A549 (cell line): ENCODE measurements at regions of chr9 and their contacts with region 1.

Region 1: GRCh38 chr9:137240861-137241489 is at the start of gene TUBB4B:
- DNase-seq: peak; percentile 99 to 100
- ATAC-seq: peak; percentile 61 to 78
- H3K4me3 ChIP-seq: peak within 1 kb of the TSS; percentile 91
- H3K27ac ChIP-seq: peak within 1 kb of the TSS; percentile 98 to 99
- H3K4me1 ChIP-seq: peaks cover 54% of the 10 kb centered on the region
- CTCF ChIP-seq: no peak
- EP300 ChIP-seq: no peak
- POLR2A ChIP-seq: peak; percentile 100
- RAD21 ChIP-seq: no peak
- polyA plus RNA-seq, gene TUBB4B: 256 and 268 TPM in 2 replicates

Region 2: DNA sequence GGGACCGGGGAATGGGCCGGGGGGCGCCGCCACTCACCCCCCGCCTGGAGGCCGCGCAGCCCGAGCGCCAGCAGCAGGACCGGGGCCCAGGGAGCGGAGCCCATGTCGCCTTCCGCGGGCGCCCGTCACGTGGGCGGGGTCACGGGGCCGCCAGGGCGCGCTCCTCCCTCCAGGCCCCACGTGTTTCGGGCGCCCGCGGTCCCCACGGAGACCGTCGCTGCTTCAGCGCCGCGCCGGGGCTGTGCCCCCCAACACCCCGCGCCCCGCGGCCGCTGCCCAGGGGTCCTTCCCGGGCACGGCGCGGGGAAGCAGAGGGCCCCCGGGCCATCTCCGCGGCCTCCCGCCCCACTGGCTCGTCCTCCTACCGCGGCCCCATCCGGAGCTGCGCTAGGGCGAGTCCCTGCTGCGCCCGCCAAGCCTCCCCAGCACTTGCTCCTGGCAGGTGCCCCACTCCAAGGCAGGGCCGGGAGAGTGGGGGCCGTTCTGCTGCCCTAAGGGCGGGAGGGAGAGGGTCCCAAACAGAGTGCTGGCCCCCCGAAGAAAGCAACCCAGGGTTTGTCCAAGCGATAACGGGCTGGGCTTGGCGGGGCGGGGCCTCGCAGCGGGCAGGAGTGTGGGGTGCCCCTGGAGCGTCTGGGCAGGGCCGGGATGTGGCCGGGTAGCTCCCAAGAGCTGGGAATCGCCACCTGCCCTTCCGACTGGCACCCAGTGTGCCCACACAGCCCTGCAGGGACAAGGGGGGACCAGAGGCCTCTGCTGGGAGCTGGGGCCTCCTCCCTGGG is 126.2 kb before region 1 on chr9 and contains the start of gene DPP7:
- CTCF ChIA-PET with region 1: interaction called, 19 read pairs
- POLR2A ChIA-PET with region 1: interaction called, 7 read pairs
- DNase-seq: peak; percentile 59 to 76
- ATAC-seq: peak; percentile 78 to 79
- H3K4me3 ChIP-seq: peak within 1 kb of the TSS; percentile 69
- H3K27ac ChIP-seq: peak within 1 kb of the TSS; percentile 96 to 97
- H3K4me1 ChIP-seq: peaks cover 6% of the 10 kb centered on the region; the same call in 2 of the 3 replicates
- CTCF ChIP-seq: no peak
- EP300 ChIP-seq: no peak
- POLR2A ChIP-seq: peak; percentile 65
- RAD21 ChIP-seq: no peak
- polyA plus RNA-seq, gene DPP7: 27.6 and 36.0 TPM in 2 replicates

Region 3: GRCh38 chr9:137150617-137151457 is 90.1 kb before region 1 on chr9:
- CTCF ChIA-PET with region 1: interaction called, 3 read pairs
- POLR2A ChIA-PET with region 1: interaction called, 25 read pairs
- DNase-seq: peak; percentile 74 to 87
- ATAC-seq: peak in 1 of 2 experiments; percentile 47; a peak in 3 of 6 replicates
- H3K4me3 ChIP-seq: no peak overlapping the region
- H3K27ac ChIP-seq: peak overlapping the region in 1 of 2 experiments; percentile 55; a peak in 3 of 6 replicates
- H3K4me1 ChIP-seq: peaks cover 21% of the 10 kb centered on the region; the same call in 1 of the 3 replicates
- CTCF ChIP-seq: no peak
- EP300 ChIP-seq: no peak
- POLR2A ChIP-seq: no peak
- RAD21 ChIP-seq: no peak

Region 4: GRCh38 chr9:137188490-137189296 is 52.3 kb before region 1 on chr9 and contains the starts of genes ANAPC2 and SSNA1:
- CTCF ChIA-PET with region 1: interaction called, 24 read pairs
- POLR2A ChIA-PET with region 1: interaction called, 11 read pairs
- DNase-seq: peak; percentile 69 to 96
- ATAC-seq: peak; percentile 66 to 82
- H3K4me3 ChIP-seq: peak within 1 kb of the TSS; percentile 92
- H3K27ac ChIP-seq: peak within 1 kb of the TSS; percentile 97
- H3K4me1 ChIP-seq: peaks cover 23% of the 10 kb centered on the region
- CTCF ChIP-seq: peak; percentile 39
- EP300 ChIP-seq: no peak
- POLR2A ChIP-seq: peak; percentile 65
- RAD21 ChIP-seq: peak; percentile 31 to 49; a peak in 3 of 5 replicates
- polyA plus RNA-seq, gene ANAPC2: 17.5 and 22.3 TPM in 2 replicates
- polyA plus RNA-seq, gene SSNA1: 52.6 and 54.1 TPM in 2 replicates

Region 5: DNA sequence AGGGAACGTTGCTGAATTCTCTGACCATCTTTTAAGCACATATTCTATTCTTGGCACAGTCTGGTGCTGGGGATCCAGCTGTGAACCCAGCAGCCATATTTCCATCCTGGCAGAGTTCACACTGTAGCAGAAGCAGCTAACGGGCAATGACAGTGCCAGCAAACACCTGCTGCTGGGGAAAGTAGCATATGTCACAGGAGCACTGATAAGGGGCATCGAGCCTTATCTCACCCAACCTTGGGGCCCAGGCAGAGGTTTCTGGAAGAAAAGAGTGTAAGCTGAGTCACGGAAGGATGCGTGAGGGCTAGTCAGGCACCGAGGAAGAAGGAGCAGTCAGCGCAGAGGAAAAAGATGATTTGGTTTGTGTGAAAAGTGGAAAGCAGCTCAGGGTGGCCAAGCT is 34.4 kb before region 1 on chr9:
- CTCF ChIA-PET with region 1: interaction called, 71 read pairs
- POLR2A ChIA-PET with region 1: interaction called, 5 read pairs
- DNase-seq: no peak
- ATAC-seq: no peak
- H3K4me3 ChIP-seq: peak overlapping the region; percentile 93
- H3K27ac ChIP-seq: peak overlapping the region in 1 of 2 experiments; percentile 97; a peak in 3 of 6 replicates
- H3K4me1 ChIP-seq: peaks cover 24% of the 10 kb centered on the region
- CTCF ChIP-seq: no peak
- EP300 ChIP-seq: no peak
- POLR2A ChIP-seq: no peak
- RAD21 ChIP-seq: no peak

Region 6: DNA sequence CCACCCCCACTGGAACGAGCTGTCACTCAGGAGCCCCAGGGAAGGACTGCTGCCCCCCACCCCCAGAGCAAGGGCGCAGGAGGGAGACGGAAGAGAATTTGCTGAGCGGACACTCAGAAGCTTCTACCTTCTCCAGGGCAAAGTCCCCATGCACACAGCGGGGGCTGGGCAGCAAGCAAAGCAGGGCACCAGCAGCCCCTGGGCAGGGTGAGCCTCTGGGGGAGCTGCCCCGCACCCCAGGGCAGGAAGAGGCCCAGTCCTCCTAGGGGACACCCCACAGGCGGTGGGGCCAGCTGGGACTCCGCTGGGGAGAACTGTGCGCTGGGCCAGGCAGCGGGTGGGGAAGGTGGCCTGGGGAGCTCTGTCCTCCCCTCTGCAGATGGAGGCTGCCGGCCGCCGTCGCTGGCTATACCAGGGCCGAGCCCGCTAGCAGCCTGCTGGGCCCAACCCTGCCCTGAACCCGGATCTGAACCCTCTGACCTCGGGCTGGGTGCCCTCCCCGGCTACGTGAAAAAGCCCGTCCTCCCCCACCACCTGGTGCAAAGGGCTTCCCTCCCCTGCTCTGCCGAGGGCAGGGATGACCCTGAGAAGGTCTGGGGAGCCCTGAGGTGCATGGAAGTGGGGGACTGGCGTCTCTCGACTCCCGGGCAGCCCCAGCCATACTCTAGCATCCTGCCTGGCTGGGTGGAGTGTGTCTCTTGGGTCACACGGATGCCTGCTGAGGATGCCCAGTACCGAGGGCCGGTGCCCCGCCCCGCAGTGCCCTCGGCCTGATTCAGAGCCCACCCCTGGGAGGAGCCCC is 10.9 kb before region 1 on chr9:
- CTCF ChIA-PET with region 1: interaction called, 102 read pairs
- POLR2A ChIA-PET with region 1: interaction called, 27 read pairs
- DNase-seq: no peak
- ATAC-seq: peak in 1 of 2 experiments; percentile 23; a peak in 3 of 6 replicates
- H3K4me3 ChIP-seq: no peak overlapping the region
- H3K27ac ChIP-seq: peak overlapping the region in 1 of 2 experiments; percentile 49; a peak in 2 of 6 replicates
- H3K4me1 ChIP-seq: peaks cover 48% of the 10 kb centered on the region
- CTCF ChIP-seq: no peak
- EP300 ChIP-seq: no peak
- POLR2A ChIP-seq: no peak
- RAD21 ChIP-seq: no peak

Region 7: DNA sequence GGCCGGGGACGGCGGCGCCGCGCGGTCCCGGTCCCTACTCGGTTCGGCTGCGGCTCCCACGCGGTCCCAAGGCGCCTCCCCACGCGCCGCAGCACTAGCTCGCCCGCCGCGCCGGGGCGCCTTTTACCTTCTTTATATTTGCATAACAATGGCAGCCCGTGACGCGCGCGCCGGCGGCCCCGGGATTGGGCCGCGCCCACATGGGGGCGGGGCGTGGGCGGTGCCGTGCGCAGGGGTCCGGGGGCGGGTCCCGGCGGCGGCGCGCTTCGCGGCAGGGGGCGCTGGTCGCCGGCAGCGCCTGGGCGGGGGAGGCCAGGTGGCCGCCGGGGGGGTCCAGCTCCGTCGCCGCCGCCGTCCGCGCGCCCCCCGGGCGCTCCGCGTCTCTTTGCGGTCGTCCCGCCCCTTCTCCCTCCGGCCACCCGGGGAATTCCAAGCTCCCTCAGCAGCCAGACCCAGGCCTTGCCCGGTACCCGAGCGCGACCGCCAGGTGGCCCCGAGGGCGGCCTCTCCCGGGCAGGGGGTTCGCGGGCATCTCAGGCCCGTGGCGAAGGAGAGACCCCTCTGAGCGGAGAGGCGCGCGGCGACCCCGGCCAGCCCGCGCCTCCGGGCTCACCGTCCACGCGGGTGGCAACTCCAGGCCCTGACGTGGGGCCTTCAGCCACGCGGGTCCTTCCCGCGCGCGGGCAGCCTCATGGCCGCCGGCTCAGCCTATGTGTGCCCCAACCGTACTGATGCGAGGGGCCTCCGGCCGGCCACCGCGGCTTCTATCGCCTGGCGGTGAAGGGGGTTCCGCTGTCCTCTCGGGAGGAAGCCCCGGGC is 61.4 kb after region 1 on chr9 and contains the start of gene NRARP:
- CTCF ChIA-PET with region 1: interaction called, 4 read pairs
- POLR2A ChIA-PET with region 1: interaction called, 19 read pairs
- DNase-seq: peak; percentile 77 to 89
- ATAC-seq: peak; percentile 54 to 61
- H3K4me3 ChIP-seq: peak within 1 kb of the TSS; percentile 49
- H3K27ac ChIP-seq: peak within 1 kb of the TSS; percentile 58 to 90
- H3K4me1 ChIP-seq: peaks cover 19% of the 10 kb centered on the region
- CTCF ChIP-seq: peak; percentile 90
- EP300 ChIP-seq: no peak
- POLR2A ChIP-seq: peak; percentile 97
- RAD21 ChIP-seq: peak; percentile 16 to 40; a peak in 3 of 5 replicates
- polyA plus RNA-seq, gene NRARP: 3.2 and 5.1 TPM in 2 replicates

Region 8: DNA sequence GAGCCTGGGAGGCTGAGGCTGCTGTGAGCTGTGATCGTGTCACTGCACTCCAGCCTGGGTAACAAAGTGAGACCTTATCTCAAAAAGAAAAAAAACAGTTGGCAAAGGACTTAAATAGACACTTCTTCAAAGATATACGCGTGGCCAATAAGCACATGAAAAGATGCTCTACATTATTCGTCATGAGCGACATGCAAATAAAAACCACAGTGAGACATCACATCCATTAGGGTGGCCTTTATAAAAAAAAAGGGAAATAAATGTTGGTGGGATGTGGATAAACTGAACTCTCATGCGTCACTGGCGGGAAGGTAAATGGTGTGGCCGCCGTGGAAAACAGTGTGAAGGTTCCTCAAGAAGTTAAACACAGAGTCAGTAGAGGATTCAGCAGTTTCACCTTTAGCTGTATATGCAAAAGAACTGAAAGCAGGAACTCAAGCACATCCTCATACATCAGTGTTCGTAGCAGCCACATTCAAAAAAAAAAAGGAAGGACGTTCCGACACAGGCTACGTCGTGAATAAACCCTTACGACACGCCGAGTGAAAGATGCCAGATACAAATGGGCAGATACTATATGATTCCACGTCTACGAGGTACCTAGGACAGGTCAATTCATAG is 85.6 kb after region 1 on chr9:
- CTCF ChIA-PET with region 1: no interaction called
- POLR2A ChIA-PET with region 1: no interaction called
- DNase-seq: no peak
- ATAC-seq: no peak; a peak in 2 of 6 replicates
- H3K4me3 ChIP-seq: no peak overlapping the region
- H3K27ac ChIP-seq: no peak overlapping the region
- H3K4me1 ChIP-seq: no peaks in the 10 kb centered on the region
- CTCF ChIP-seq: no peak
- EP300 ChIP-seq: no peak
- POLR2A ChIP-seq: no peak
- RAD21 ChIP-seq: no peak

Region 9: GRCh38 chr9:137470785-137471184 is 229.8 kb after region 1 on chr9:
- CTCF ChIA-PET with region 1: no interaction called
- POLR2A ChIA-PET with region 1: no interaction called
- DNase-seq: no peak
- ATAC-seq: no peak
- H3K4me3 ChIP-seq: no peak overlapping the region
- H3K27ac ChIP-seq: no peak overlapping the region
- H3K4me1 ChIP-seq: no peaks in the 10 kb centered on the region
- CTCF ChIP-seq: no peak
- EP300 ChIP-seq: no peak
- POLR2A ChIP-seq: no peak
- RAD21 ChIP-seq: no peak